CD4-positive, alpha-beta memory T cell (primary cell): ENCODE measurements at regions of chr17 and their contacts with region 1.

Region 1: GRCh38 chr17:58249270-58250133 is 11.1 kb downstream of the LPO start:
- DNase-seq: peak; percentile 69 to 80 (median 73)
- H3K4me3 ChIP-seq: peak overlapping the region in 1 of 2 donors; percentile 62
- H3K4me3 Mint-ChIP-seq: peak overlapping the region; percentile 70 to 86 (median 80)
- H3K27ac ChIP-seq: no peak overlapping the region
- H3K27ac Mint-ChIP-seq: peak overlapping the region in 2 of 7 donors; percentile 2 to 18
- H3K4me1 ChIP-seq: peaks cover 11% of the 10 kb centered on the region
- H3K4me1 Mint-ChIP-seq: peaks cover 3 to 9% (median 6%) of the 10 kb centered on the region in 4 donors
- H3K27me3 ChIP-seq: no peaks in the 10 kb centered on the region
- H3K27me3 Mint-ChIP-seq: peaks cover 1 to 5% of the 10 kb centered on the region in 2 donors

Region 2: DNA sequence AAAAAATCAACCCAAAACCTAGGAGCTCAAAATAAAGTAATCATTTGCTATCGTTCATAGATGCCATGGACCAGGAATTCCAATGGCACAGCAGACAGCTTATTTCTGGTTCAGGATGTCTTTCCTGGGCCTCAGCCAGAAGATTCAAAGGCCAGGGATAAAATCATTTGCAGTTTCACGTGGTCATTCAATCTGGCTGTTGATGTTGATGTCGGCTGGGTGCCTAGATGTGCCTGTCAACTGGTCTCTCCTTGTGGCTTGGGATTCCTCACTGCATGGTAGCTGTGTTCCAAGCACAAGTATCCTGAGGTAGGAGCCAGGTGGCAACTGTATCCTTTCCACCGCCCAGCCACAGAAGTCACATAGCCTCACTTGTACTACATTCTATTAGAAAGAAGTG is 67.7 kb before region 1 on chr17:
- CTCF ChIA-PET with region 1: no interaction called
- POLR2A ChIA-PET with region 1: no interaction called
- intact Hi-C with region 1: no loop called
- DNase-seq: no peak
- H3K4me3 ChIP-seq: no peak overlapping the region
- H3K4me3 Mint-ChIP-seq: no peak overlapping the region
- H3K27ac ChIP-seq: no peak overlapping the region
- H3K27ac Mint-ChIP-seq: no peak overlapping the region
- H3K4me1 ChIP-seq: peaks cover 3% of the 10 kb centered on the region
- H3K4me1 Mint-ChIP-seq: peaks cover 2 to 6% (median 4%) of the 10 kb centered on the region in 4 donors
- H3K27me3 ChIP-seq: no peaks in the 10 kb centered on the region
- H3K27me3 Mint-ChIP-seq: peaks cover 5 to 6% of the 10 kb centered on the region in 2 donors

Region 3: DNA sequence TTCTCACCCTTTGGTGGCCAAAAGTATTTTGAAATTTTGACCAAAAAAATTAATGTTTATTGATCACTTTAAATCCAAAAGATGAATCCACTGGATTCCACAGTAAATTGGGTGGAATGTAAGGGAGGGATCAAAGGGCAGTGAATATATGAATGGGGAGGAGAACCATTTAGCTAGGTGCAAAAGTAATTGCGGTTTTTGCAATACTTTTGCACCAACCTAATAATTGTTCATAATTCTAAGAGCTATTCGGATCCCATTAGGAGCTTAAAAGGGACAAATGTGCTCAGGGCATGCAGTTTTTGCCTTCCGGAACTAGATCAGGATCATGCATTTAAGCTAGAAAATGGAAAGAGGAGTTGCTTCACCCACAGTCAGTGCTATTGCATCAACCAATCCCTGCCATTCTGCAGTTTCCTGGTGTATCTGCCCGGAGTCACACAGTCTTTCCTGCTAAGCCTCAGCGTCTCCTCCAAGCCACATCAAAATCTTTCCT is 11.3 kb before region 1 on chr17 and contains the start of gene LPO:
- CTCF ChIA-PET with region 1: interaction called, 25 read pairs
- POLR2A ChIA-PET with region 1: no interaction called
- intact Hi-C with region 1: no loop called
- DNase-seq: no peak
- H3K4me3 ChIP-seq: no peak within 1 kb of the TSS
- H3K4me3 Mint-ChIP-seq: no peak within 1 kb of the TSS
- H3K27ac ChIP-seq: no peak within 1 kb of the TSS
- H3K27ac Mint-ChIP-seq: no peak within 1 kb of the TSS
- H3K4me1 ChIP-seq: no peaks in the 10 kb centered on the region
- H3K4me1 Mint-ChIP-seq: no peaks in the 10 kb centered on the region
- H3K27me3 ChIP-seq: peaks cover 10% of the 10 kb centered on the region
- H3K27me3 Mint-ChIP-seq: peaks cover 25 to 37% of the 10 kb centered on the region in 2 donors
- total RNA-seq, gene LPO: not detected

Region 4: GRCh38 chr17:58487589-58488427 is 238.3 kb after region 1 on chr17 and contains the start of gene HSF5:
- CTCF ChIA-PET with region 1: interaction called, 4 read pairs
- POLR2A ChIA-PET with region 1: interaction called, 3 read pairs
- intact Hi-C with region 1: loop called (anchors 1 kb)
- DNase-seq: peak; percentile 76 to 83 (median 82)
- H3K4me3 ChIP-seq: peak within 1 kb of the TSS; percentile 46 to 47
- H3K4me3 Mint-ChIP-seq: peak within 1 kb of the TSS; percentile 50 to 81 (median 70)
- H3K27ac ChIP-seq: peak within 1 kb of the TSS; percentile 20
- H3K27ac Mint-ChIP-seq: peak within 1 kb of the TSS in 5 of 7 donors; percentile 15 to 72 (median 47)
- H3K4me1 ChIP-seq: peaks cover 4% of the 10 kb centered on the region
- H3K4me1 Mint-ChIP-seq: peaks cover 5 to 15% (median 5%) of the 10 kb centered on the region in 4 donors
- H3K27me3 ChIP-seq: no peaks in the 10 kb centered on the region
- H3K27me3 Mint-ChIP-seq: no peaks in the 10 kb centered on the region
- total RNA-seq, gene HSF5: 2.1 to 2.4 TPM